CD4-positive, alpha-beta T cell (primary cell): ENCODE measurements at regions of chr3 and their contacts with region 1.

Region 1: GRCh38 chr3:30606301-30607031 is at the start of gene TGFBR2:
- DNase-seq: peak; percentile 61 to 91 (median 79)
- ATAC-seq: peak; percentile 62
- H3K4me3 ChIP-seq: peak within 1 kb of the TSS; percentile 73
- H3K4me3 Mint-ChIP-seq: peak within 1 kb of the TSS; percentile 99
- H3K27ac ChIP-seq: peak within 1 kb of the TSS; percentile 61 to 91
- H3K27ac Mint-ChIP-seq: peak within 1 kb of the TSS; percentile 96
- H3K4me1 ChIP-seq: peaks cover 28% of the 10 kb centered on the region
- H3K4me1 Mint-ChIP-seq: peaks cover 63% of the 10 kb centered on the region
- H3K27me3 ChIP-seq: no peaks in the 10 kb centered on the region
- H3K27me3 Mint-ChIP-seq: no peaks in the 10 kb centered on the region
- CTCF ChIP-seq: no peak
- total RNA-seq, gene TGFBR2: 203 to 205 TPM

Region 2: DNA sequence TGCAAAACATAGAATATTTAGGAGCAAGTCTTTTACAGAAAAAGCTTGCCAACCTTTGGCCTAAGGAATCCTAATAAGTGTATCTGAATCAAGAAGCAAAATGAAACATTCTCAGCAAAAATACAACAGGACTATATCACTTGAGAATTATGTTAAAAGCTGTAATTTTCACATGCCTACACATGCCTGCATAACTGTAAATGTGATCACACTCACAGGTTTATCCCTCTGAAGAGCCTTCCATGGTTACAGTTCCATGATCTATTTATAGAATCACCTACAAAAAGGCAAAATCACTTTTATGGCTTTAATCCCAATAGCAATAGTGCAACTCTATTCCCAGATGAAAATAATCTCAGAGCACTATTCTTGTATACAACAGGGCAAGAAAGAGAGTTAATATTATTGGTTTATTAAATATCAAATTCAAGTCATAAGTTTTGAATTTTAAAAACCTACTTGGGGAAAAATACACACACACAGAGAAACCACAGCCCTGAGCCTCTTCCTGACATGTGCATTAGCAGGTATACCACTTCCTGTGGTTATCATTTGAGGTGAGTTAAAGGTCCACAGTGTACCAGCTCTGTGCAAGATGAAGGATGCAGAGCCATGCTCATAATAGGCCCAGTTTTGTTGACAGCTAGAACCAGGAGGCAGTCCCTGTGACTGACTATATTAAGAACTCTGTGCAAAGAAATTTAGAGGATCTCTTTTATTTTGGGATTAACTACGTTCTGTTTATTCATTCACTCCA is 252.6 kb before region 1 on chr3:
- CTCF ChIA-PET with region 1: no interaction called
- POLR2A ChIA-PET with region 1: interaction called, 30 read pairs
- intact Hi-C with region 1: loop called in 1 of 2 experiments (anchors 10 kb)
- DNase-seq: peak in 13 of 14 experiments; percentile 10 to 96 (median 35)
- ATAC-seq: peak; percentile 98
- H3K4me3 ChIP-seq: no peak overlapping the region
- H3K4me3 Mint-ChIP-seq: peak overlapping the region; percentile 76
- H3K27ac ChIP-seq: no peak overlapping the region
- H3K27ac Mint-ChIP-seq: peak overlapping the region; percentile 86
- H3K4me1 ChIP-seq: peaks cover 45% of the 10 kb centered on the region
- H3K4me1 Mint-ChIP-seq: peaks cover 91% of the 10 kb centered on the region
- H3K27me3 ChIP-seq: no peaks in the 10 kb centered on the region
- H3K27me3 Mint-ChIP-seq: no peaks in the 10 kb centered on the region
- CTCF ChIP-seq: no peak

Region 3: DNA sequence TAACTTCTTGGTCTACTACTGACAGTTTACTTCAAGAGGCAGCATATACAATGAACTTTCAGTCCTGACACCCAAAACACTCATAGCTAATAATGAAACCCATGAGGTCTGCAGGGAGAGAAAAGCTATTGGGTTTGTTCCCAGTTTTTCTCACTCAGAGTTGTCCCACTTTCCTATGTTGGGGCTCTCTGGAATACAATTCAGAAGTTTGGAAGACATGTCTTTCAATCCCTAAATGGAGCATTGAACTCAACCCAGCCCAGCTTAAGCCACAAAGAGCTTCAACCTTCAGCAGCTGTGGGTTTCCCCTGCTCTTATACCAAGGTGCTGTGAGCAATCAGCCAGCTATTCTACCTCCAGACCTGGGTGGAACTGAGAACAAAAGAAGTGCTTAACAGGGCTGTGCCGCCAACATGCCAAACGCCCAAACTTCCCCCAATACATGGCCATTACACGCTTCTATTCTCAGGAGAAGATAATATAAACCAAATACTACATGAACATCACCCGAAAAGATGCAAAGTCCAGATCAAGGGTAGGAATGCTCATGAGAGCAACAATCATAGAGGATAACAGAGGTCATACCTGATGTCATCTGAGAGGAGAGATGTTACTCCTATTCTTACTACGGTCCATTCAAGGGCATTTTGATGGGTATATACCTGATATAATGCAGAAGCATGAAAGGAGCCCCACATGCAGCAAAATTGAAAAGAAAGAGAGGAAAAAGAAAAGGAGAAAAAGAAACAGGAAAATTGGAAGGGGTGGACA is 131.2 kb before region 1 on chr3:
- CTCF ChIA-PET with region 1: no interaction called
- POLR2A ChIA-PET with region 1: no interaction called
- intact Hi-C with region 1: loop called in 1 of 2 experiments (anchors 10 kb)
- DNase-seq: peak in 3 of 14 experiments; percentile 24 to 45 (median 34)
- ATAC-seq: peak; percentile 89
- H3K4me3 ChIP-seq: no peak overlapping the region
- H3K4me3 Mint-ChIP-seq: peak overlapping the region; percentile 15
- H3K27ac ChIP-seq: no peak overlapping the region
- H3K27ac Mint-ChIP-seq: peak overlapping the region; percentile 5
- H3K4me1 ChIP-seq: no peaks in the 10 kb centered on the region
- H3K4me1 Mint-ChIP-seq: peaks cover 47% of the 10 kb centered on the region
- H3K27me3 ChIP-seq: no peaks in the 10 kb centered on the region
- H3K27me3 Mint-ChIP-seq: no peaks in the 10 kb centered on the region
- CTCF ChIP-seq: no peak

Region 4: DNA sequence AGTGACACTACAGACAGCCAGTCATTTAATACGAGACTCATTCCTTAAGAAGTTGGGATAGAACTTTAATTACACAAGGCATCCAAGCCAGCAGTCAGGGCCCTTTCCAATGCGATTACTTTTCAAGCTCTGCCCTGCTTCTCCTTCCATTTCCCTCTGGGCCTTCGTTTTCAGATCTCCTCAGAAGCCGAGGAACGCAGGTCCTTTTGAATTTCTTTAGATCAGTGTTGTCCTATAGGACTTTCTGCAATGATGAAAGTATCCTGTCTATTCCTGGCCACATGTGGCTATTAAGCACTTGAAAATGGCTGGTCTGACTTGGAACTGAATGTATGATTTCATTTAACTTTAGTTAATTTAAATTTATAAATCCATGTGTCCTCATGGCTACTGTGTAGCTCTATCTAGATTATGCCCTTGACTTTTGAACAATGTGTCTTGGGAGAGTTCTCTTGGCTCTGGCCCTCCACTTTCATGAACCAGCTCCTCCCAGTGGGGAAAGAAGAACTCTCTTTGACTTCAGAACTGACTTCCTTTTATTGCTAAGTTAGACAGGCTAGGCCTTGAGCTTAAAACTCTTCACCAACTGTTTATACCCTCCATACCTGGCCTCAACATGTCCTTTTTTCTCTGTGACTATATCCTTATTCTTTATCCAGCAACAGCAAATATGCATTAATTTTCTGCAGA is 22.6 kb after region 1 on chr3:
- CTCF ChIA-PET with region 1: interaction called, 8 read pairs
- POLR2A ChIA-PET with region 1: interaction called, 31 read pairs
- intact Hi-C with region 1: loop called in 1 of 2 experiments (anchors 2 kb)
- DNase-seq: peak in 4 of 14 experiments; percentile 43 to 75 (median 73)
- ATAC-seq: peak; percentile 32
- H3K4me3 ChIP-seq: no peak overlapping the region
- H3K4me3 Mint-ChIP-seq: peak overlapping the region; percentile 68
- H3K27ac ChIP-seq: peak overlapping the region; percentile 77 to 90
- H3K27ac Mint-ChIP-seq: peak overlapping the region; percentile 96
- H3K4me1 ChIP-seq: peaks cover 74% of the 10 kb centered on the region
- H3K4me1 Mint-ChIP-seq: peaks cover 100% of the 10 kb centered on the region
- H3K27me3 ChIP-seq: no peaks in the 10 kb centered on the region
- H3K27me3 Mint-ChIP-seq: no peaks in the 10 kb centered on the region
- CTCF ChIP-seq: peak; percentile 40

Region 5: GRCh38 chr3:30667280-30667651 is 60.8 kb after region 1 on chr3:
- CTCF ChIA-PET with region 1: interaction called, 4 read pairs
- POLR2A ChIA-PET with region 1: interaction called, 62 read pairs
- intact Hi-C with region 1: no loop called
- DNase-seq: peak in 5 of 14 experiments; percentile 24 to 73 (median 66)
- ATAC-seq: peak; percentile 25
- H3K4me3 ChIP-seq: no peak overlapping the region
- H3K4me3 Mint-ChIP-seq: peak overlapping the region; percentile 66
- H3K27ac ChIP-seq: peak overlapping the region; percentile 46 to 71
- H3K27ac Mint-ChIP-seq: peak overlapping the region; percentile 86
- H3K4me1 ChIP-seq: peaks cover 63% of the 10 kb centered on the region
- H3K4me1 Mint-ChIP-seq: peaks cover 98% of the 10 kb centered on the region
- H3K27me3 ChIP-seq: no peaks in the 10 kb centered on the region
- H3K27me3 Mint-ChIP-seq: no peaks in the 10 kb centered on the region
- CTCF ChIP-seq: no peak